Mammary epithelial cell (primary cell): ENCODE measurements at regions of chr5 and their contacts with region 1.

Region 1: GRCh38 chr5:66306105-66306843 is 162.2 kb downstream of the SREK1 start:
- DNase-seq: peak; percentile 58
- H3K4me3 ChIP-seq: no peak overlapping the region
- H3K27ac ChIP-seq: no peak overlapping the region
- H3K4me1 ChIP-seq: no peaks in the 10 kb centered on the region
- H3K27me3 ChIP-seq: no peaks in the 10 kb centered on the region
- CTCF ChIP-seq: peak; percentile 79 to 97

Region 2: DNA sequence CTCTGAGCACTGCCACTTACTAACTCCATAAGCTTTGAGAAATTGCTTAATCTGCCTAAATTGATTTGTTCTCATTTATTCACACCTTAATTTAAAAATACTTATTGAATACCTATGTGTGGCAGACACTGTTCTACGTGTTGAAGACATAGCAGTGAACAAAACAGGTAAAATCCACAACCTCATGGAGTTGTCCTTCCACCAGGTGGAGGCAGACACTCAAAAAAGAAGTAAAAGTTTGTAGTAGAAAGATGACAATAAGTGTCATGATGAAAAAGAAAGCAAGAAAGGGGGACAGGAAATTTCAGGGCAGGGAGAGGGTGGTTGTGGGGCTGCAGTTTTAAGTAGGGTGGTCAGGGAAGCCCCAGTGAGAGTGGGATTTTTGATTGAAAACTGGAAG is 67.2 kb before region 1 on chr5:
- CTCF ChIA-PET with region 1: interaction called, 3 read pairs
- dilution Hi-C with region 1: loop called (anchors 5 kb)
- in situ Hi-C with region 1: no loop called
- intact Hi-C with region 1: loop called (anchors 1 kb)
- DNase-seq: peak; percentile 32
- H3K4me3 ChIP-seq: no peak overlapping the region
- H3K27ac ChIP-seq: no peak overlapping the region
- H3K4me1 ChIP-seq: no peaks in the 10 kb centered on the region
- H3K27me3 ChIP-seq: peaks cover 4% of the 10 kb centered on the region
- CTCF ChIP-seq: peak; percentile 30 to 52

Region 3: DNA sequence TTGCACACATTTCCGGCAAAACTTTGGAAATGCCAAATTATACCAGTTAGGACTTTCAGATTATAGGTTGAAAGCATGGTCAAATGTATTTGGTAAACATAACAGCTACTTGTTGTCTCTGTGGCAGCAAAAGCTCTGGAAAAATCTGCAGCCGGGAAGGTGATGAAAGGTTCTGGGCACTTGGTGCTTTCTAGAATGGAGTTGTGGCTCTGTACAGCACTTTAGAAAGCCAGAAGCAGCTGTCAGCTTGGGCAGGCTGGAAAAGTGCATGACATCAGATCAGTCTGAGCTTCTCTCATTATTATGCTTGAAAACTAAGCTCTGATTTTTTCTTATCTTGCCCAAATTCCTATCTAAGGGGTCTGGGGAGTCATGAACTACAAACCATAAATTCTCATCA is 171.3 kb after region 1 on chr5:
- CTCF ChIA-PET with region 1: interaction called, 13 read pairs
- dilution Hi-C with region 1: no loop called
- in situ Hi-C with region 1: no loop called
- intact Hi-C with region 1: no loop called
- DNase-seq: no peak
- H3K4me3 ChIP-seq: no peak overlapping the region
- H3K27ac ChIP-seq: no peak overlapping the region
- H3K4me1 ChIP-seq: no peaks in the 10 kb centered on the region
- H3K27me3 ChIP-seq: no peaks in the 10 kb centered on the region
- CTCF ChIP-seq: no peak

Region 4: DNA sequence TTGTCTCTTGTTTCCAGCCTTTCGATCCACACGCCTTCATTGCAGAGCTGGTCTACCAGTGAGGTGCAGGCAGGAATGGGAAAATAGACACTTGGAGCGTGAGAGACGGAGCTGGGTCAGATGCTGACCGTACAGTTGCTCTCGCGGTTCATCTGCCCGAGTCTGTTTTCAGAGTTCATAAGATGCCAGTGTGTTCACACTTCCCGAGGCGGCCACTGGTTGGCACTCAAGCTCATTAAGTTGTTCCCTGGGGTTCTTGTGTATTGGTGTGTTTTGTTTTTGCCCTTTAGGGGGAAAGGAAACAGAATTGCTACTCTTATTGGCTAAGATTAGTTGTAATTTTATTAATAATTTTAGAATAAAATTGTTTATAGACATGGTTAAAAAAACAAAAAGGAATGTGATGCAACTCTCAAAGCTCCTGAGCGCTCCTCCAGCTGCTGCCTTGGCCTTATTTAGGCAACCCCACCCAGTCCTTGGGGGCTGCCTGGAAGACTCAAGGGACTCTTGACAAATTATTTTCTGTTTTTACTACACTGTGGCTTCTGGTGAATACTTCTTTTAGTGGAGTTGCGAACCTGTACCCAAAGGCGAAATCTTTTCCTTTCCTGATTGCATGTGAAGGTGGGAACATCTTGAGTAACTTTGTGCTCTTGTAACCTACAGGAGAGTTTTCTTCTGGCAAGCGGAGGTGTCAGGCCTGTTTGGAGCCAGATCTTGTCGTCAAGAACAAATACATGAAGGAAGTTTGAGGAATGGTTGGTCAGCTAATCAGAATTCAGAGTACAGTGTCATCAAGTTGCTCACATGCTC is 436.0 kb after region 1 on chr5:
- CTCF ChIA-PET with region 1: interaction called, 10 read pairs
- dilution Hi-C with region 1: no loop called
- in situ Hi-C with region 1: no loop called
- intact Hi-C with region 1: no loop called
- DNase-seq: no peak
- H3K4me3 ChIP-seq: no peak overlapping the region
- H3K27ac ChIP-seq: no peak overlapping the region
- H3K4me1 ChIP-seq: no peaks in the 10 kb centered on the region
- H3K27me3 ChIP-seq: no peaks in the 10 kb centered on the region
- CTCF ChIP-seq: peak; percentile 16 to 30

Region 5: GRCh38 chr5:66764982-66765381 is 458.7 kb after region 1 on chr5:
- CTCF ChIA-PET with region 1: interaction called, 4 read pairs
- dilution Hi-C with region 1: no loop called
- in situ Hi-C with region 1: loop called in 1 of 2 experiments (anchors 5 kb)
- intact Hi-C with region 1: no loop called
- DNase-seq: no peak
- H3K4me3 ChIP-seq: no peak overlapping the region
- H3K27ac ChIP-seq: no peak overlapping the region
- H3K4me1 ChIP-seq: no peaks in the 10 kb centered on the region
- H3K27me3 ChIP-seq: peaks cover 3% of the 10 kb centered on the region
- CTCF ChIP-seq: no peak

Region 6: DNA sequence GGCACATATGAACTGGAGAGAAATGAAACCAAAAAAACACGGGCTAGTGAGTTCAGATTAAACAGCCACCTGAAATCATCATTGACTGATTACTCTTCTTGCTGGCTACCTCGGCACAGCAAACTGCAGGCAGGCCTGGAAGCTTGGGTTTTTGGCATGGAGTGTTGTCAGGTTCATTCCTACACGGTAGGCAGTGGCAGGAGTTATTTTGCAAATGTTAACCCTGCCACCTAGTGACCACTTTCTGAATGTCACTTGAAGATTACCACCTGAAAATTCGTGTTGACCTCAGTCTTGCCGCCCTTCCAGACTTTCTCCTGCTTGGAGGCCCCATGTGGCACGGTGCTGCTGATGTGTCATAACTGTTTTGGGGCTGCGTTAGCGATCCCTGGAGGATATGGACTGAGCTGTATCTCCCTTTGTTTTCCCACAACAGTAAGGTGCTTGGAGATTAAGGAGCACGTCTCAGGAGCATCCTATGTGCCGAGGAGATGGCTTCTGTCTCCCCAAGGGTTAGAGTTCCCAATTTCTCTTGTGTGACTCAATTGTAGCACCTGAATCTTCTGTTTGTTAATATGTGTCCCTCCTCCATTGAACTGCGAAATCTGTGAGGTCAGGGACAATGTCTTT is 903.0 kb after region 1 on chr5:
- CTCF ChIA-PET with region 1: no interaction called
- dilution Hi-C with region 1: no loop called
- in situ Hi-C with region 1: no loop called
- intact Hi-C with region 1: loop called (anchors 5 kb)
- DNase-seq: peak; percentile 84
- H3K4me3 ChIP-seq: no peak overlapping the region
- H3K27ac ChIP-seq: no peak overlapping the region
- H3K4me1 ChIP-seq: peaks cover 50% of the 10 kb centered on the region
- H3K27me3 ChIP-seq: no peaks in the 10 kb centered on the region
- CTCF ChIP-seq: peak; percentile 50 to 67